Activated CD4-positive, alpha-beta T cell treated with anti-CD3 and anti-CD28 coated beads for 36 hours (primary cell): ENCODE measurements at regions of chr1 and their contacts with region 1.

Region 1: DNA sequence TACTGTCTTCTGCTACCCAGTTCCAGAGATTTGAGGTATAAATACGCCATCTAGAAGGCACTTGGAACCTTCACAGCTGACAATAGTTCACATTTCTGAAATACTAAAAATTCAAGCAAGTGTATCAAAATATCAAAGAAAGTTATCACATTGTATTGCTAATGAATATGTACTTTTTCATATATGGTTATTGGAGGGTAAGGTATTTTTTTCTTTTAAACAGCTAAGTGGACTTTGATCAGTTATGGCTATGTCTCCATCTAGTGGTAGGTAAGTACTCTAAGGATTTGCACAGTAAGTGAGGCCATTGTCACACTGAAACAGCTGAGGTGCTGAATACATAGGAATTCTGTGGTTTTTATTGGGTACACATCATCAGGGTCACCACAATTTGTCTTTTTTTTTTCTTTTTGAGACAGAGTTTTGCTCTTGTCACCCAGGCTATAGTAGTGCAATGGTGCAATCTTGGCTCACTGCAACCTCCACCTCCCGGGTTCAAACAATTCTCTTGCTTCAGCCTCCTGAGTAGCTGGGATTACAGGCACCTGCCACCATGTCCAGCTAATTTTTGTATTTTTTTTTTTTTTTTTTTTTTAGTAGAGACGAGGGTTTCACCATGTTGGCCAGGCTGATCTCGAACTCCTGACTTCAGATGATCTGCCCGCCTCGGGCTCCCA is 49.1 kb upstream of the CR2 start:
- DNase-seq: no peak
- ATAC-seq: peak; percentile 78
- H3K4me3 Mint-ChIP-seq: no peak overlapping the region
- H3K27ac Mint-ChIP-seq: no peak overlapping the region
- H3K4me1 Mint-ChIP-seq: peaks cover 25% of the 10 kb centered on the region
- H3K27me3 Mint-ChIP-seq: no peaks in the 10 kb centered on the region

Region 2: GRCh38 chr1:207052911-207053769 is 351.8 kb before region 1 on chr1 and contains the start of gene PFKFB2:
- CTCF ChIA-PET with region 1: interaction called, 6 read pairs
- POLR2A ChIA-PET with region 1: no interaction called
- intact Hi-C with region 1: loop called (anchors 1 to 10 kb)
- DNase-seq: peak; percentile 96
- ATAC-seq: peak; percentile 83
- H3K4me3 Mint-ChIP-seq: peak within 1 kb of the TSS; percentile 99
- H3K27ac Mint-ChIP-seq: peak within 1 kb of the TSS; percentile 89
- H3K4me1 Mint-ChIP-seq: peaks cover 39% of the 10 kb centered on the region
- H3K27me3 Mint-ChIP-seq: no peaks in the 10 kb centered on the region
- total RNA-seq, gene PFKFB2: 3.1 to 3.5 TPM

Region 3: GRCh38 chr1:207084701-207085180 is 320.2 kb before region 1 on chr1:
- CTCF ChIA-PET with region 1: interaction called, 36 read pairs
- POLR2A ChIA-PET with region 1: no interaction called
- intact Hi-C with region 1: loop called (anchors 1 kb)
- DNase-seq: peak; percentile 70
- ATAC-seq: peak; percentile 77
- H3K4me3 Mint-ChIP-seq: no peak overlapping the region
- H3K27ac Mint-ChIP-seq: no peak overlapping the region
- H3K4me1 Mint-ChIP-seq: peaks cover 20% of the 10 kb centered on the region
- H3K27me3 Mint-ChIP-seq: peaks cover 7% of the 10 kb centered on the region

Region 4: DNA sequence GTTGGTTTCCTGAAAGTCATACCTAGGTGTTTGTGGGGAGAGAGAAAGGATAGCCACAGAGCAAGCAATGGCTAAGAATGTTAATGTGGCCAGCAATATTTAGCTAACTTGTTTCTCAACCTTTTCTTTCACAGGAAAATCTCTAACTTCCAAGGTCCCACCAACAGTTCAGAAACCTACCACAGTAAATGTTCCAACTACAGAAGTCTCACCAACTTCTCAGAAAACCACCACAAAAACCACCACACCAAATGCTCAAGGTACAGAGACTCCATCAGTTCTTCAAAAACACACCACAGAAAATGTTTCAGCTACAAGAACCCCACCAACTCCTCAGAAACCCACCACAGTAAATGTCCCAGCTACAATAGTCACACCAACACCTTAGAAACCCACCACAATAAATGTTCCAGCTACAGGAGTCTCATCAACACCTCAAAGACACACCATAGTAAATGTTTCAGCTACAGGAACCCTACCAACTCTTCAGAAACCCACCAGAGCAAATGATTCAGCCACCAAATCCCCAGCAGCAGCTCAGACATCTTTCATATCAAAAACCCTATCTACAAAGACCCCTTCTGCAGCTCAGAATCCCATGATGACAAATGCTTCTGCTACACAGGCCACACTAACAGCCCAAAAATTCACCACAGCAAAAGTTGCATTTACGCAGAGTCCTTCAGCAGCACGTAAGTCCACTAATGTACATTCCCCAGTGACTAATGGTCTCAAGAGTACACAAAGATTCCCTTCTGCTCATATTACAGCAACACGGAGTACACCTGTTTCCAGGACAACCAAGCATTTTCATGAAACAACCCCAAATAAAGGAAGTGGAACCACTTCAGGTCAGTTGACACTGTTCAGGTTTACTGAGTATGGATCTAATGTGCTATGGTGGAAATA is 68.2 kb before region 1 on chr1:
- CTCF ChIA-PET with region 1: interaction called, 7 read pairs
- POLR2A ChIA-PET with region 1: no interaction called
- intact Hi-C with region 1: loop called in 1 of 2 experiments (anchors 5 kb)
- DNase-seq: peak; percentile 55
- ATAC-seq: peak; percentile 67
- H3K4me3 Mint-ChIP-seq: peak overlapping the region; percentile 8
- H3K27ac Mint-ChIP-seq: peak overlapping the region; percentile 86
- H3K4me1 Mint-ChIP-seq: peaks cover 69% of the 10 kb centered on the region
- H3K27me3 Mint-ChIP-seq: no peaks in the 10 kb centered on the region

Region 5: DNA sequence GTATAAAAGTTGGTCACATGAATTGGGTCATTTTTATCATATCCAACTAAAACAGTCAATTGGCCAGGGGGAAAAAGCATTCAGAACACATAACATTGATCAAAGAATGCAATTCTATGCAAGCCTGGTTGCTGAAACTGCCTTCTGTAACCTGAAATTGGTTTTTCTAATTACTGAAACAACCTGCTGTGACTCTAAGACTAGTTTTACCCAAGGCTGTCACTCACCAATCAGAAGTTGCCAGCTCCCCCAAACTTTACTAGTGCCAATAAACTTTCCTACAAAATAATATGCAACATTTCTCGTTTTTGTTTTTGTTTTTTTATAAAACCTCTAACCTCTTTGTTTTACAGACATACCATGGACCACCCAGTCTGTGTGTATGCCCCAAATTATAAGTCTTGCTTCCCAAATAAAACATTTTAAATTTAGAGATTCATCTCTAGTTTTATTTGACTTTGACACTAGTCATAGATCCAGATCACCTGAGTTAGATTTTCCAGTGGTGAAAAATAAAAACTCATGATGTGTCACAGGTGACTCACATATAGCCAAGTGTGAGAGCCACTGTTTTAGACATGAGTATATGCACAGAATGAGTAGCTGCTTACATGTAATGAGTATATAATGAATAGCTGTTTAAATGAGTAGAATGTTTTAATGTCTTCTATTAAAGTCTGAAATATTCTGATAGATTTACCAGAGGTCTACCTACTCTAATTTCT is 15.1 kb before region 1 on chr1:
- CTCF ChIA-PET with region 1: interaction called, 8 read pairs
- POLR2A ChIA-PET with region 1: no interaction called
- intact Hi-C with region 1: loop called in 1 of 2 experiments (anchors 1 kb)
- DNase-seq: peak; percentile 29
- ATAC-seq: peak; percentile 98
- H3K4me3 Mint-ChIP-seq: no peak overlapping the region
- H3K27ac Mint-ChIP-seq: peak overlapping the region; percentile 83
- H3K4me1 Mint-ChIP-seq: peaks cover 19% of the 10 kb centered on the region
- H3K27me3 Mint-ChIP-seq: no peaks in the 10 kb centered on the region

Region 6: GRCh38 chr1:207848234-207848633 is 443.2 kb after region 1 on chr1:
- CTCF ChIA-PET with region 1: no interaction called
- POLR2A ChIA-PET with region 1: no interaction called
- intact Hi-C with region 1: no loop called
- DNase-seq: peak; percentile 82
- ATAC-seq: peak; percentile 96
- H3K4me3 Mint-ChIP-seq: no peak overlapping the region
- H3K27ac Mint-ChIP-seq: peak overlapping the region; percentile 87
- H3K4me1 Mint-ChIP-seq: peaks cover 74% of the 10 kb centered on the region
- H3K27me3 Mint-ChIP-seq: no peaks in the 10 kb centered on the region